A549 (cell line): ENCODE measurements at regions of chr16 and their contacts with region 1.

Region 1: DNA sequence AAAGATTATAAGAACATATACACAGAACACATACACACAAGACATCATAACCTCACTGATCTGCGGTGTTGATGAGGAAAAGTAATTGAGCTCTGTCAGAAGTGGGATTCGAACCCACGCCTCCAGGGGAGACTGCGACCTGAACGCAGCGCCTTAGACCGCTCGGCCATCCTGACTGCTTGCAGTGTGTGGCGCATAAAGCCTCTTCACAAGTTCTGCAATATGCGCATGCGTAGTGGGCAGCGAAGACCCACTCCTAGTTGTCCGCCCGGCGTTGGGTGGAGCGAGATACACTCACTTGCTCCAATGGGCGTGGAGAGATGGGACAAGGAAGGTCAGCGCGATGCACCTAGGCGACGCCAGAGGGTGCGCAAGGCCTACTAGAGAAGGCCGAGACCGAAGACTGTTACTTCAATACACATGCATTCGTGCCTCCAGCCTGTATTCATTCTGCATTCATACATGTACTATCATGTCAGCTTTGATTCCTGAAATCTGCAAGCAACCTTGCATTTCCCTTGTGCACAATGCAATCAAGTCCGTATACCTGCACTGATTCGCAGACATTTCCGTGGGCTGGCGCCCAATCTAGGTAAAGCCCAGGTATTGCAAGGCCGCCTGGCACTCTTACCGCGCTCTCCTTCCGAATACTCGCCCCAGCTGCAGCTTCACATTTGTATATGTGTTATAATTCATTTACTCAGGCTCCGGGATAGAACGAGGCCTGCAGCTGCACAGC is 16.1 kb upstream of the PLLP start:
- DNase-seq: peak; percentile 93 to 99
- ATAC-seq: peak; percentile 77 to 83
- H3K4me3 ChIP-seq: peak overlapping the region; percentile 37
- H3K27ac ChIP-seq: peak overlapping the region; percentile 42 to 70; a peak in 4 of 6 replicates
- H3K4me1 ChIP-seq: peaks cover 23% of the 10 kb centered on the region
- CTCF ChIP-seq: peak; percentile 95
- EP300 ChIP-seq: no peak
- POLR2A ChIP-seq: no peak
- RAD21 ChIP-seq: peak; percentile 99 to 100

Region 2: GRCh38 chr16:57244767-57245471 is 55.6 kb before region 1 on chr16 and contains the start of gene ARL2BP:
- CTCF ChIA-PET with region 1: interaction called, 9 read pairs
- POLR2A ChIA-PET with region 1: interaction called, 11 read pairs
- DNase-seq: peak; percentile 98 to 99
- ATAC-seq: peak; percentile 96 to 98
- H3K4me3 ChIP-seq: peak within 1 kb of the TSS; percentile 78
- H3K27ac ChIP-seq: peak within 1 kb of the TSS; percentile 89 to 98
- H3K4me1 ChIP-seq: peaks cover 11% of the 10 kb centered on the region
- CTCF ChIP-seq: peak; percentile 29; the same call in 1 of the 3 replicates
- EP300 ChIP-seq: no peak
- POLR2A ChIP-seq: peak; percentile 85
- RAD21 ChIP-seq: peak; percentile 27 to 28; a peak in 2 of 5 replicates
- polyA plus RNA-seq, gene ARL2BP: 117 and 126 TPM in 2 replicates

Region 3: DNA sequence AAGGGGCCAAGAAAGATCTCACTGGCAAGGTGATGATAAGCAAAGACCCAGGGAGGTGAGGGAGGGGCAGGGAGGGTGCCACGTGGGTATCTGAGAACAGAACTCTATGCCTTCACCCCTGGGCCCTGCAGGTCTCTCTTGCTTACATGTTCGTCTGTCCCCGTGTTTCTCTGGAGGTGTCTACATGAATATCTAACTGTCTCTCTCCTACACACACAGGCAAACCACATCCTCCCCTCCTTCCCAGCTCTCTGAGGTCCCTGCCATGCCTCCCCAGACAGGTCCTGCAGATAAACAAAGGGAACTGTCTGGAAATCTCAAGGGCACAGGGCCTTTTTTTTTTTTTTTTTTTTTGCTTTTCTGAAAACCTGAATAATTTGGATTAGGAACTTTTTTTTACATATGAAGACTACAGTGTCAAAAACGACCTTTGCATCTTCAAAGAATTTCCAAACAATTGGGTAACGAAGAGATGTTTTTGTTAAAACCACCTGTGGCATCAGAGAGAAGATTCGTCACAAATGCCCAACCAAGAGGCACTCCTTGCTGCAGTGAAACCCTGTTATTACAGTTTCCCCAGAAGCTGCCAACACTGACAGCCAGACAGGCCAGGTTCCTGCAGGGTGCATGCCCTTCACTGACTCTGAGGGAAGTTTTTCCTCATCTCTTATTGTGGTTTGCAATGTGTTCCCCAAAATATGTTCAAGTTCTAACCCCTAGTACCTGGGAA is 33.9 kb before region 1 on chr16:
- CTCF ChIA-PET with region 1: no interaction called
- POLR2A ChIA-PET with region 1: no interaction called
- DNase-seq: no peak
- ATAC-seq: no peak
- H3K4me3 ChIP-seq: no peak overlapping the region
- H3K27ac ChIP-seq: peak overlapping the region in 1 of 2 experiments; percentile 15; a peak in 1 of 6 replicates
- H3K4me1 ChIP-seq: no peaks in the 10 kb centered on the region
- CTCF ChIP-seq: no peak
- EP300 ChIP-seq: no peak
- POLR2A ChIP-seq: no peak
- RAD21 ChIP-seq: no peak

Region 4: GRCh38 chr16:57316390-57317017 is 15.9 kb after region 1 on chr16:
- CTCF ChIA-PET with region 1: interaction called, 38 read pairs
- POLR2A ChIA-PET with region 1: interaction called, 6 read pairs
- DNase-seq: peak; percentile 47 to 68
- ATAC-seq: peak; percentile 69 to 78
- H3K4me3 ChIP-seq: no peak overlapping the region
- H3K27ac ChIP-seq: peak overlapping the region; percentile 74 to 85
- H3K4me1 ChIP-seq: peaks cover 40% of the 10 kb centered on the region
- CTCF ChIP-seq: no peak
- EP300 ChIP-seq: 0 out of 5 replicates have a peak, but pooled peaks of 1 of the 2 experiments have one; percentile 25
- POLR2A ChIP-seq: no peak
- RAD21 ChIP-seq: no peak

Region 5: DNA sequence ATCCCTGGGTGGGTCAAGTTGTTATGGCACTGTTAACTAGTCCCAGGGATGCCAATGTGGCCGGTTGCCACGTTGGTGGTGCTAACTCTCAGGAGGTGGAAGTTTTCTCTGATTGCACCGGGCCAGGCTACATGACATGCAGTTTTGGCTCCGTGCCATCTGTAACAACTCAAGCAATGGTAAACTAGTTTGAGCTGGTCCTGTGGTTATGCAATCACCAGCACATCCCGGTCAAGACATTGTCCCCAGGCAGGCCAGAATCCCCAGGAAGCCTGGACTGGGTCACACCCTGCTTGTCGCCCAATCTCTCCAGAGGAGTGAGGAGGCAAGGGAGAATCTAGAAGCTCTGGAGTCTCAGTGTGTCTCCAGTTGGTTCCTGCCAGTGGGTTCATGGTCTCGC is 93.9 kb after region 1 on chr16:
- CTCF ChIA-PET with region 1: interaction called, 16 read pairs
- POLR2A ChIA-PET with region 1: no interaction called
- DNase-seq: no peak
- ATAC-seq: no peak
- H3K4me3 ChIP-seq: no peak overlapping the region
- H3K27ac ChIP-seq: no peak overlapping the region
- H3K4me1 ChIP-seq: no peaks in the 10 kb centered on the region
- CTCF ChIP-seq: no peak
- EP300 ChIP-seq: no peak
- POLR2A ChIP-seq: no peak
- RAD21 ChIP-seq: no peak

Region 6: DNA sequence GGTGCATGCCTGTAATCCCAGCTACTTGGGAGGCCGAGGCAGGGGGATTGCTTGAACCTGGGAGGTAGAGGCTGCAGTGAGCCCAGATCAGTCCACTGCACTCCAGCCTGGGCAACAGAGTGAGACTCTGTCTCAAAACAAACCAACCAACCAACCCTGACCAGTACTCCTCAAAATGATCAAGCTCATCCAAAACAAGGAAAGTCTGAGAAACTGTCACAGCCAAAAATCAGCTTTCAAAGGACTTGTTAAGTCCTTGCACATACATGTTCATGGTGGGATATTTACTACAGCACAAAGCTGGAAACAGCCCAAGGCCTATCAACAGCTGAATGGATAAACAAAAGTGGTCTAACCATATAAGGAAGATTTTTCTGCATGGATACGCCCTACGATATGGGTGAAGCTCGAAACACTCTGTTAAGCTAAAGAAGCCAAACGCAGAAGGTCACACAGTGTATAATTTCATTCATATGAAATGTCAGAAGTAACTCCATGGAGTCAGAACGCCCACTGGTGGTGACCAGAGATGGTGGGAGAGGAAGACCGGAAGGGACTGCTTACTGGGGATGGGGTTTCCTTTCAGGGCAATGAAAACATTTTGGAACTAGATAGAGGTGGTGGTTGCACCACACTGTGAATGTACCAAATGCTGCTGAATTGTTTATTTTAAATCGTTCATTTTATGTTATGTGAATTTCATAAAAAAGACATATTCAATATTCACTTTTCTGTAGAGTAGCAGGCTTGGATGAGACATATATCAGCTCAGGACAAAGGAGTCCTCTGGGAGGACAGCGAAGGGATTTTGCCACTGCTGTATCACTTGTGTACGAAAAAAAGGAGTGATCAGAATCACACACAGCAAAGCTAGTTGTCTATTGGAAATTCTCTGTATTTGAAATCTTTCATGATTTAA is 121.7 kb after region 1 on chr16:
- CTCF ChIA-PET with region 1: interaction called, 709 read pairs
- POLR2A ChIA-PET with region 1: interaction called, 9 read pairs
- DNase-seq: peak; percentile 55 to 72
- ATAC-seq: peak; percentile 67 to 73
- H3K4me3 ChIP-seq: no peak overlapping the region
- H3K27ac ChIP-seq: peak overlapping the region in 1 of 2 experiments; percentile 47; a peak in 3 of 6 replicates
- H3K4me1 ChIP-seq: peaks cover 31% of the 10 kb centered on the region
- CTCF ChIP-seq: peak; percentile 75
- EP300 ChIP-seq: no peak
- POLR2A ChIP-seq: no peak
- RAD21 ChIP-seq: peak; percentile 82 to 86

Region 7: DNA sequence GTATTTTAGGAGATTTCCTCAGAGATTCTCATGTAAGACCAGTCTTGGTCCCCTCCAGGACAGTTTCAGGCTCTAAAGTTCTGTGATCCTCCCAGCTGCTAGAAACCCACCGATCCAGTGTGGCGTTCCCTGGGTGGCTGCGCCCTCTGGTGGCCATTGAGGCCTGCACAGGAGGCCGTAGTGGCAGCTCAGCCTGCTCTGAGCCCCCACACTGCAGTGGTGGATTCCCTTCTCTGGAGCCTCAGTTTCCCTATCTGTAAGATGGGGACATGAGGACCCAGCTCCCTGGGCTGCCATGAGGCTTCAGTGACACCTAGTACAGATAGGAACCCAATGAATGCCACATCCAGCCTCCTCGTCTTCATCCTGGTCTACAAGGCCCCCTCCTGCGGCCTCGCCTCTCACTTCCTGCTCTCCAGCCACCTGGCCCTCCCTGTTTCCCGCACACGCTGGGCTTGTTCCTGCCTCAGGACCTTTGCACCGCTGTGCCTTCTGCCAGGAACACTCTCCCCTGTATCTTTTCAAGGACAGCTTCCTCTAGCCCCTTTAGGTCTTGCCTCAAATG is 219.3 kb after region 1 on chr16:
- CTCF ChIA-PET with region 1: interaction called, 20 read pairs
- POLR2A ChIA-PET with region 1: no interaction called
- DNase-seq: peak; percentile 68 to 91
- ATAC-seq: peak; percentile 85 to 96
- H3K4me3 ChIP-seq: no peak overlapping the region
- H3K27ac ChIP-seq: peak overlapping the region; percentile 29 to 57; a peak in 3 of 6 replicates
- H3K4me1 ChIP-seq: no peaks in the 10 kb centered on the region
- CTCF ChIP-seq: peak; percentile 98
- EP300 ChIP-seq: no peak
- POLR2A ChIP-seq: no peak
- RAD21 ChIP-seq: peak; percentile 97 to 98